ENCODE measurements at regions of chr20 and their contacts with region 1.

Region 1: DNA sequence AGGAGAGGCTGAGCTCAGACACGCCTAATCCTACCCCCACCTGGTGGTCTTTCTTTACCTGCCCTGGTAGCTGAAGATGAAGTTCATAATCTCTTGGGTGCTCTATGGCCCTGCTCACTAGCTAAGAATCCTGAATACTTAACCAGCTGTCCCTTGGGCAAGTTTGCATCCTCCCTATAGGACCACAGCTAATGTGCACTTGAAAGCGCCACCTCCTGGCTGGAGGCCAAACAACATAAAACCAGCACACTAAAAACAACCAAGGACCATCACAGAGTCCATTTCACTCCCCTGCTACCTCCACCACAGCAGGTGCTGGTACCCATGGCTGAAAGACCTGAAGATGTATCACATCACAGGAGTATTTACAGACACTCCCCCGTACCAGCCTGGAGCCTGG is 155.5 kb upstream of the SLC24A3 start:
- DNase-seq: no peak
- ATAC-seq: no peak
- H3K4me3 ChIP-seq: no peak overlapping the region
- H3K27ac ChIP-seq: no peak overlapping the region
- H3K4me1 ChIP-seq: no peaks in the 10 kb centered on the region
- H3K27me3 ChIP-seq: no peaks in the 10 kb centered on the region
- CTCF ChIP-seq: 0 out of 2 replicates have a peak, but pooled peaks have one; percentile 26
- EP300 ChIP-seq: no peak
- POLR2A ChIP-seq: no peak
- RAD21 ChIP-seq: no peak

Region 2: DNA sequence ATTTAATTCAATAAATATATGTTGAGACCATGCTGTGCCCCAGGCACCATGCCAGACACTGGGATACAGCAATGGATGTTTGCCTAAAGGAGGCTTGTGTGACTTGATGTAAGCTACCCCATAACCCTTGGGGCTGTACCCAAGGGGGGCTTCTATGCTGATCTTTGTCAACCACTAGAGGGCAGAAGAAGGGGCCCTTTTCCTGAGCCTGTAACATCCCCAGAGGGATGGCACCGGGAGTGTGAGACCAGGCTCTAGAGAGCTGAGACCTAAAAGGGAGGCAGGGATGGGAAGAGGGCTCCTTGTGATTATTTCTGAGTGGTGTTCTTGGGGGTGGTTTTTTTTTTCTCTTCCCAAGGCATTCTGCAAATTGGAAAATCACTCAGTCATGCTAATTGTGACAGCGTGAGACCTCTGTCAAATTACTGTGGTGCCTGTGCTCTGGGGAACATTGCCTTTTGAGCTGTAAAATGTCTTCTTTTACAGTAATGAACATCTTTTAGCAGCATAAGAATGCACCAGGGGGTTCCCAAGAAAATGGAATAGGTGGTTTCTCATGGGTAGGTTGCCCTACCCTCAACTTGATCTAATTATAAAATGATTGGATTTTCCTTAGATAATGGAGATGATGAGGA is 16.8 kb after region 1 on chr20:
- CTCF ChIA-PET with region 1: no interaction called
- POLR2A ChIA-PET with region 1: no interaction called
- in situ Hi-C with region 1: no loop called
- intact Hi-C with region 1: no loop called
- DNase-seq: peak; percentile 20
- ATAC-seq: peak; percentile 93
- H3K4me3 ChIP-seq: no peak overlapping the region
- H3K27ac ChIP-seq: no peak overlapping the region
- H3K4me1 ChIP-seq: no peaks in the 10 kb centered on the region
- H3K27me3 ChIP-seq: no peaks in the 10 kb centered on the region; a peak in 2 of 5 replicates
- CTCF ChIP-seq: peak; percentile 54
- EP300 ChIP-seq: no peak
- POLR2A ChIP-seq: no peak
- RAD21 ChIP-seq: no peak

Region 3: DNA sequence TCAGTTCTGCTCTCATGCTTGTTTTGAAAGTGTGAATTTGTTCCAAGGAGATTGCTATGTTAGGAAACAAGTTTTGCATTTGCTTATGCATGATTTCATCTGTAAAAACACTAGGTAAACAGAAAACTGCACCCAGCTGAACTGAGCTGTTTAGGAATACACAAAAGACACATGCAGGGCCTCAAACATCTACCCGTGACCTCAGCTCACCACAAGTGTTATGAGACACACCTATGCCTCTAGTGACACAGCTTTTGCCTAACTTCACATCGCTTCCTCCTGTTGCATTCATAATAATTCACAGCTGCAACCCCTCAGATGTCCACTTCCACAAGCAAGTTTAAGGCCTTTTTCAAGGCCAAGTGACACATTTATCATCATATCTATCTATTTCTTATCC is 57.5 kb after region 1 on chr20:
- CTCF ChIA-PET with region 1: no interaction called
- POLR2A ChIA-PET with region 1: no interaction called
- in situ Hi-C with region 1: loop called (anchors 10 kb)
- intact Hi-C with region 1: no loop called
- DNase-seq: no peak
- ATAC-seq: no peak
- H3K4me3 ChIP-seq: no peak overlapping the region
- H3K27ac ChIP-seq: no peak overlapping the region
- H3K4me1 ChIP-seq: no peaks in the 10 kb centered on the region
- H3K27me3 ChIP-seq: no peaks in the 10 kb centered on the region
- CTCF ChIP-seq: no peak
- EP300 ChIP-seq: no peak
- POLR2A ChIP-seq: no peak
- RAD21 ChIP-seq: no peak

Measured in HepG2 (cell line).